Activated CD8-positive, alpha-beta T cell treated with anti-CD3 and anti-CD28 coated beads for 36 hours (primary cell): ENCODE measurements at regions of chr1 and their contacts with region 1.

Region 1: GRCh38 chr1:160951443-160952128 is 3.0 kb downstream of the ITLN2 start:
- DNase-seq: peak; percentile 88
- ATAC-seq: peak; percentile 93
- H3K4me3 Mint-ChIP-seq: no peak overlapping the region
- H3K27ac Mint-ChIP-seq: no peak overlapping the region
- H3K4me1 Mint-ChIP-seq: peaks cover 7% of the 10 kb centered on the region
- H3K27me3 Mint-ChIP-seq: no peaks in the 10 kb centered on the region
- CTCF ChIP-seq: peak; percentile 76

Region 2: GRCh38 chr1:160768295-160768657 is 183.3 kb before region 1 on chr1:
- CTCF ChIA-PET with region 1: interaction called, 38 read pairs
- POLR2A ChIA-PET with region 1: no interaction called
- intact Hi-C with region 1: no loop called
- DNase-seq: peak; percentile 94
- ATAC-seq: peak; percentile 80
- H3K4me3 Mint-ChIP-seq: peak overlapping the region; percentile 78
- H3K27ac Mint-ChIP-seq: peak overlapping the region; percentile 92
- H3K4me1 Mint-ChIP-seq: peaks cover 51% of the 10 kb centered on the region
- H3K27me3 Mint-ChIP-seq: no peaks in the 10 kb centered on the region
- CTCF ChIP-seq: peak; percentile 89

Region 3: GRCh38 chr1:160830321-160831153 is 121.0 kb before region 1 on chr1:
- CTCF ChIA-PET with region 1: interaction called, 298 read pairs
- POLR2A ChIA-PET with region 1: no interaction called
- intact Hi-C with region 1: loop called (anchors 2 kb)
- DNase-seq: peak; percentile 89
- ATAC-seq: peak; percentile 84
- H3K4me3 Mint-ChIP-seq: no peak overlapping the region
- H3K27ac Mint-ChIP-seq: peak overlapping the region; percentile 62
- H3K4me1 Mint-ChIP-seq: peaks cover 34% of the 10 kb centered on the region
- H3K27me3 Mint-ChIP-seq: no peaks in the 10 kb centered on the region
- CTCF ChIP-seq: peak; percentile 68

Region 4: GRCh38 chr1:160862203-160863060 is 89.2 kb before region 1 on chr1 and contains the start of gene CD244:
- CTCF ChIA-PET with region 1: interaction called, 42 read pairs
- POLR2A ChIA-PET with region 1: no interaction called
- intact Hi-C with region 1: no loop called
- DNase-seq: peak; percentile 86
- ATAC-seq: peak; percentile 95
- H3K4me3 Mint-ChIP-seq: peak within 1 kb of the TSS; percentile 58
- H3K27ac Mint-ChIP-seq: peak within 1 kb of the TSS; percentile 67
- H3K4me1 Mint-ChIP-seq: peaks cover 32% of the 10 kb centered on the region
- H3K27me3 Mint-ChIP-seq: no peaks in the 10 kb centered on the region
- CTCF ChIP-seq: no peak
- total RNA-seq, gene CD244: 1.4 to 1.8 TPM

Region 5: GRCh38 chr1:160972939-160973338 is 21.4 kb after region 1 on chr1:
- CTCF ChIA-PET with region 1: interaction called, 10 read pairs
- POLR2A ChIA-PET with region 1: no interaction called
- intact Hi-C with region 1: no loop called
- DNase-seq: no peak
- ATAC-seq: no peak
- H3K4me3 Mint-ChIP-seq: no peak overlapping the region
- H3K27ac Mint-ChIP-seq: no peak overlapping the region
- H3K4me1 Mint-ChIP-seq: peaks cover 13% of the 10 kb centered on the region
- H3K27me3 Mint-ChIP-seq: peaks cover 10% of the 10 kb centered on the region
- CTCF ChIP-seq: no peak

Region 6: GRCh38 chr1:160997323-160998038 is 45.9 kb after region 1 on chr1:
- CTCF ChIA-PET with region 1: interaction called, 18 read pairs
- POLR2A ChIA-PET with region 1: no interaction called
- intact Hi-C with region 1: no loop called
- DNase-seq: peak; percentile 72
- ATAC-seq: peak; percentile 84
- H3K4me3 Mint-ChIP-seq: no peak overlapping the region
- H3K27ac Mint-ChIP-seq: peak overlapping the region; percentile 73
- H3K4me1 Mint-ChIP-seq: peaks cover 21% of the 10 kb centered on the region
- H3K27me3 Mint-ChIP-seq: no peaks in the 10 kb centered on the region
- CTCF ChIP-seq: peak; percentile 57

Region 7: DNA sequence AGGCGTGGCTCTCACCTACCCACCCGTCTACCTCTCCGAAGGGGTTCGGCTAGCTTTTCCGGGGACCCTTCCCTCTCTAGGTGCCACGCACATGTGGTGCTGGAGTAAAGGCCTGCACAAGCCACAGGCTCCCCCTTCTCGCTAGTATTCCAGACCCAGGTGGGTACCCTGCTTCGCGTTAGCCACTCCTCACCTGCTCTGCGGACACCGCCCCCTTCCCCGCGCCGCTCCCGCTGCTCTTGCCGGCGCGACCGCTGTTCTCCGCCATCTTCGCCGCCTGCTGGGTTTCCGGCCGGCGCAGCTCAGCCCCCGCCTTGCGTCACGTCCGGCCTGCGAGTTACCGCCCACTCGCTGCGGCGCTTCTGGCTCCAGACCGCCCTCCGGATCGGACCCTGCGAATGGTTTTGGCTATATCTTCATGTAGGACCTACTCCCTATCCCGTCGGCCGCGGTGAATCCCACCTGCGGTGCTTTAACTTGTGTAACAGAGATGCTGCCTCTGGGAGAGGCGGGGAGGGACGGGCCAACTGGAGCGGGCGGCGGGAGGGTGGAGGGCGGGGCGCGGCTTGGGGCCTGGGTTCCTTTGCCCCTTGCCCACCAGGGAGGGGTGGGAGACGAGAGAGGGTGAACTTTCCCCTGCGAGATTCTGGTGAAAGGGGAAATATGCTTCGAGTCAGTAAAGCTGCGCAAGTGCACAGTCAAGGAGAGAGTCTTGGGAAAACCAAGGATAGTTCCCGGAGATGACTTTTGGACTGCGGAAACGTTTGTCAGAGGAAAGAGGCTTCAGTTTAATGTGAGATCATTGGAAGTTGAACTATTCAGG is 166.4 kb after region 1 on chr1 and contains the starts of genes NIT1 and PFDN2:
- CTCF ChIA-PET with region 1: no interaction called
- POLR2A ChIA-PET with region 1: no interaction called
- intact Hi-C with region 1: no loop called
- DNase-seq: peak; percentile 92
- ATAC-seq: peak; percentile 62
- H3K4me3 Mint-ChIP-seq: peak within 1 kb of the TSS; percentile 94
- H3K27ac Mint-ChIP-seq: peak within 1 kb of the TSS; percentile 92
- H3K4me1 Mint-ChIP-seq: peaks cover 70% of the 10 kb centered on the region
- H3K27me3 Mint-ChIP-seq: no peaks in the 10 kb centered on the region
- CTCF ChIP-seq: no peak
- total RNA-seq, gene NIT1: 38.5 to 40.0 TPM
- total RNA-seq, gene PFDN2: 137 to 144 TPM